ENCODE measurements at regions of chr12 and their contacts with region 1.

Region 1: DNA sequence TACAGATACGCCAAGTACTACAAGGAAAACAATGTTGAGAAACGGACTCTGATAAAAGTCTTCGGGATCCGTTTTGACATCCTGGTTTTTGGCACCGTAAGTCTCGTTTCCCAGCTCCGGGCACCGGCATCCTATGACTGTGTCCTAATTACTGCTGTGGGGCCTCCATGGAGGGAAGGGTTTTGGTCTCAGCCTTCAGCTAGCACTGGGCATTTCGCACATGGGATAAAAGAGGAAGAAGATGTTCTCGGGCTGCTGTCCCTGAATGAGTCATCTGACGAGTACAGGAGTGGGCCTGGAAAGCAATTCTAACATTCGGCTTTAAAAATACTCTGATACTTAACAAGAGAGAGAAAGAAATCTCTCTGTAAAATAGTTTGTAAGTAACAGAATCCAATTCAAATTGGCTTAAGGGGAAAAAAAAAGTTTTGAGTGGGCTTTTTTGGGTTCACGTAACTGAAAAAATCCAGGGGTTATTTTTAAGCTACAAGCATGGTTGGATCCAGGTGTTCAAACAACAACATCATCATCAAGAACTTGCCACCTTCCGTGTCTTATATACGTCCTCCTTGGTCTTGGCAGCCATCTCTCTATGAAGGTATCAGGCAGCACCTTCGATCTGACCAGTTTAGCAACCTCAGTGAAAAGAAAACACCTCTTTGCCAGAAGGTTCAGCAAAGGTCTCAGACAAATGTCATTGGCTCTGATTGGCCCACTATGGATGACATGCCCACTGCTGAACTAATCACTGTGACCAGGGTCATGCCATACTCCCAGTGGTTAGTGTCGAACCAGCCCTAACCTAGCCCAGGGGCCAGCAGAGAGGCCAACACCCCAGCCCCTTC is 34.3 kb upstream of the P2RX4 start:
- DNase-seq: peak; percentile 79 to 94 (median 88)
- H3K4me3 ChIP-seq: no peak overlapping the region
- H3K4me3 Mint-ChIP-seq: peak overlapping the region; percentile 2 to 51
- H3K27ac ChIP-seq: peak overlapping the region; percentile 51 to 73
- H3K27ac Mint-ChIP-seq: peak overlapping the region; percentile 87 to 96 (median 92)
- H3K4me1 ChIP-seq: peaks cover 28 to 36% of the 10 kb centered on the region in 2 donors
- H3K4me1 Mint-ChIP-seq: peaks cover 32% of the 10 kb centered on the region
- H3K27me3 ChIP-seq: no peaks in the 10 kb centered on the region
- H3K27me3 Mint-ChIP-seq: peaks cover 0 to 6% (median 0%) of the 10 kb centered on the region in 3 donors
- CTCF ChIP-seq: no peak

Region 2: DNA sequence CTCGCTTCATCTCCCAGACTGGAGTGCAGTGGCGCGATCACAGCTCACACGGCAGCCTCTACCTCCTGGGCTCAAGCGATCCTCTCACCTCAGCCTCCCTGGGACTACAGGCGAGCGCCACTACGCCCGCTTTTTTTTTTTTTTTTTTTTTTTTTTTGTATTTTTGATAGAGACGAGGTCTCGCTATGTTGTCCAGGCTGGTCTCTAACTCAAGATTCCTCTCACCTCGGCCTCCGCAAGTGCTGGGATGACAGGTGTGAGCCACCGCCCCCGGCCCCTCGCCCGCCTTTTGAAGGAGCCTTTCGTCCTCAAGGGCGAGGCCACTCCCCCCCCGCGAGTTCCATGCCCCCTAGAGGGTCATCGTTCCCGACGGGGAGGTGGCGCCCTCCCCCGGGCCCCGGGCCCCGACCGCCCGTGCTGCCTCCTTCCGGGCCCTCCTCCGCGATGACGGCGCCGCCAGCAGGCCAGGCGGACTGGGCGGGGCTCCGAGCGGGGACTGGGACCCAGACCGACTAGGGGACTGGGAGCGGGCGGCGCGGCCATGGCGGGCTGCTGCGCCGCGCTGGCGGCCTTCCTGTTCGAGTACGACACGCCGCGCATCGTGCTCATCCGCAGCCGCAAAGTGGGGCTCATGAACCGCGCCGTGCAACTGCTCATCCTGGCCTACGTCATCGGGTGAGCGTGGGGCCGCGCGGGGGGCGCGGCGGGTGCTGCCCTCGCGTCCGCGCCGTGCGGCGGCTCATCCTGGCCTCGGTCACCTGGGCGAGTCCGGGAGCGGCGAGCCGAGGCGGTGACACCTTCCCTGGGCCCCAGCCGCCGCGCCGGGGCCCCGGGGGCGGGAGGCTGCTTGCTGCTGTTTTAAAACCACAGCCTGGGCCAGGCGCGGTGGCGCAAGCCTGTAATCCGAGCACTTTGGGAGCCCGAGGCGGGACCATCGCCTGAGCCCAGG is 34.3 kb after region 1 on chr12 and contains the start of gene P2RX4:
- intact Hi-C with region 1: loop called (anchors 5 kb)
- DNase-seq: peak; percentile 86 to 90 (median 87)
- H3K4me3 ChIP-seq: peak within 1 kb of the TSS; percentile 84 to 87 (median 86)
- H3K4me3 Mint-ChIP-seq: peak within 1 kb of the TSS; percentile 82 to 92
- H3K27ac ChIP-seq: peak within 1 kb of the TSS; percentile 92 to 96
- H3K27ac Mint-ChIP-seq: peak within 1 kb of the TSS; percentile 83 to 98 (median 96)
- H3K4me1 ChIP-seq: peaks cover 47 to 51% of the 10 kb centered on the region in 2 donors
- H3K4me1 Mint-ChIP-seq: peaks cover 47% of the 10 kb centered on the region
- H3K27me3 ChIP-seq: no peaks in the 10 kb centered on the region
- H3K27me3 Mint-ChIP-seq: no peaks in the 10 kb centered on the region
- CTCF ChIP-seq: peak; percentile 47
- polyA plus RNA-seq, gene P2RX4: 61.8 to 87.7 (median 74.7) TPM

Region 3: GRCh38 chr12:121214855-121215745 is 39.5 kb after region 1 on chr12:
- intact Hi-C with region 1: loop called (anchors 5 kb)
- DNase-seq: peak; percentile 90 to 97 (median 95)
- H3K4me3 ChIP-seq: peak overlapping the region in 1 of 3 experiments; percentile 41
- H3K4me3 Mint-ChIP-seq: peak overlapping the region; percentile 57 to 62
- H3K27ac ChIP-seq: peak overlapping the region; percentile 95 to 97
- H3K27ac Mint-ChIP-seq: peak overlapping the region; percentile 98 to 100 (median 99)
- H3K4me1 ChIP-seq: peaks cover 50 to 56% of the 10 kb centered on the region in 2 donors
- H3K4me1 Mint-ChIP-seq: peaks cover 53% of the 10 kb centered on the region
- H3K27me3 ChIP-seq: no peaks in the 10 kb centered on the region
- H3K27me3 Mint-ChIP-seq: peaks cover 0 to 3% (median 0%) of the 10 kb centered on the region in 3 donors
- CTCF ChIP-seq: no peak